ENCODE measurements at regions of chr11 and their contacts with region 1.

Region 1: DNA sequence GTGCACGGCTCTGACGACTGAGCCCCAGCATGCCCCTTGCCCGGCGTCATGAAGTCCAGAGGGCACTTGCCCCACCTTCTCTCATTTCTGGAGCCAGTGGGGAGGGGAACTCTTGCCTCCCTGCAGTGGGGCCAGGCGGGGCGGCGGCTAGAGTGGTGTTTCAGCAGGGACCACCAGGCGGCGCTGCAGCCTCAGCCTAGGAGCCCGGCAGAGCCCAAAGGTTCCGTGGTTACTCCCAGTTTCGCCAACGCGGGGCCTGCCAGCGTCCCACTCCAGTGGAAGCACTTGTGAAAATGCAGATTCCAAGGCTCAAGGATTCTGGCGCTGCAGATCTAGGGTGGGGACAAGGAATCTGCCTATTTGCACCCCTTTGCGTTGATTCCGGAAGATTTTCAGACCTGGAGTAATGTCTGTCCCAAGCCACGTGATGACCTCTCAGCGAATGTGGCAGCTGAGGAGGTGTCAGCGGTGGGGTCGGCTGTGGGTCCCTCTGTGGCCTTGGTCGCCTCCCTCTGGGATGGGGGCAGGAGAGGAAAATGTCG is 55.7 kb downstream of the CD82 start:
- DNase-seq: peak; percentile 73 to 91 (median 80)
- H3K4me3 ChIP-seq: peak overlapping the region in 25 of 59 donors; percentile 5 to 46 (median 26)
- H3K27ac ChIP-seq: peak overlapping the region in 17 of 59 donors; percentile 0 to 69 (median 24)
- H3K27me3 ChIP-seq: no peaks in the 10 kb centered on the region
- CTCF ChIP-seq: peak; percentile 91 to 100 (median 98)

Region 2: DNA sequence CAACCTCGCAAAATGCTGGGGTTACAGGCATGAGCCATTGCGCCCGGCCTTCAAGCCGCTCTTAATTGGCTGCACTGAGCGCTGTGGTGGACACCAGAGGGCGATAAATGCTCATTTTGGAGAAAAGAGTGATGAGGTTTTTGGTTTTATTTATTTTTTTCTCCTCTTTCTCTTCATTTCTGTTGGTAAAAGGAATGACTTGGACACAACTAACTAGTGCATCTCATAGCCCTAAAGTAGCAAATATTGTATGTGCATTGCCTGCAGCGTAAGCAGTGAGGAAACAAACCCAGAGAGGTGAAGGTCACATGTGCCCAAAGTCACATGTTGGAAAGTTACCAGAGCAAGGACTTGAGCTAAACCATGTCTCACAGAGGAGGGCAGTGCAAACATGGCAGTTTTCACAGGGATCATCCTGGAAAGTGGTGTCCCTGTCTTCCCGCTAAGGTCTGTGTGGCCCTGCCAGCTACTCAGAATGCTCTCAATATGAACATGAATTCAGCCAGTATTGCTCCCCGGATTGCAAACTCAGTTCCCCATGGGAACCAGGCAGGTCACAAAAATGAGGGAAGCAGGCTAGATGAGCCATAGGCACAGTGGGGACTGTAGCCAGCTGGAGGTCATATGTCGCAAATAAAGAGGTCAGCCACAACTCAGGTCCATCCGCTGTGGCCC is 64.3 kb before region 1 on chr11:
- intact Hi-C with region 1: loop called (anchors 1 kb)
- DNase-seq: peak in 8 of 10 donors; percentile 61 to 80 (median 69)
- H3K4me3 ChIP-seq: no peak overlapping the region
- H3K27ac ChIP-seq: peak overlapping the region in 23 of 59 donors; percentile 2 to 74 (median 40)
- H3K27me3 ChIP-seq: no peaks in the 10 kb centered on the region
- CTCF ChIP-seq: peak; percentile 40 to 95 (median 84)

Region 3: DNA sequence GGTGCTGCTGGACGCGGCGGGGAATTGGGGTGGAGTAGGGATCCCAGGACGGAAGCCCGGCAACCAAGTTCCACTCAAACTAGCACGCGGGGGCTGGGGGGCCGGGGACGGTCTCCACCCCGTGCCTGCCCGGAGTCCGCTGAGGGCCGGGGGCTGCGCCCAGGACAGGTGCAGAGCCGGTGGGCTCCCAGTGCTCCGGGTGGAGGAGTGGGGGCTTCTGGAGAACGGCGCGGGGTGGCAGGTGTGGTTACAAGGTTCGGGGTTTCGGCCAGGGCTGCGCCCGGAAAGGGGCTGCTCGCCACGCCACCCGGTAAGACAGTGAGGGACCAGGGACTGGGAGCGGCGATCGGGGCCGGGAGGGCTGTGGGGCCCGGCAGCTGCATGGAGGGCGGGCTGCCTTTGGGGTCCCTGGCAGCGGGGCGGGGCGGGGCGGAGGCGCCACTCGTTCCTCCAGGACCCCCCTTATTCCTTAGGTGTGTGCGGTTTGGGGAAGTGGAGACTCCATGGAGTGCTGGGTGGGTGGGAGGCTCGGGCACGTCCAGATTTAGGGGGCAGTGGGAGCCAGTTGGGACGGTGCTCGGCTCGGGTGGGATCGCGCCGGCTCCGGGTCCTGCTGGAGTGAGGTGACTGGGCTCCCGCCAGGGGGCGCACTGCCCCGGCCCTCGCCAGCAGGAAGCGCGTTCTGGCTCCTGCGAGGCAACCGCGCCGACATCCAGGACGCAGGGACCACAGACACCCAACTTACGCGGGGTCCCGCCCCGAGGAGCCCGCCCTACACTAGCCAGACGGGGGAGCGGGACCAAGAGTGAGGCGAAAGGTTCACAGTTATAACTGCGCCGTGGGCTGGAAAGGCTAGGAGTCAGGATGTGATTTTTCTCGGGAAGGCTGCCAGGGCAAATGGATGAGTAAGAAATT is 106.4 kb after region 1 on chr11:
- intact Hi-C with region 1: loop called in 1 of 2 experiments (anchors 2 kb)
- DNase-seq: peak; percentile 60 to 92 (median 70)
- H3K4me3 ChIP-seq: peak overlapping the region; percentile 40 to 76 (median 61)
- H3K27ac ChIP-seq: peak overlapping the region in 6 of 59 donors; percentile 6 to 78 (median 50)
- H3K27me3 ChIP-seq: peaks cover 0 to 38% (median 6%) of the 10 kb centered on the region in 45 donors
- CTCF ChIP-seq: peak; percentile 66 to 99 (median 95)

Region 4: DNA sequence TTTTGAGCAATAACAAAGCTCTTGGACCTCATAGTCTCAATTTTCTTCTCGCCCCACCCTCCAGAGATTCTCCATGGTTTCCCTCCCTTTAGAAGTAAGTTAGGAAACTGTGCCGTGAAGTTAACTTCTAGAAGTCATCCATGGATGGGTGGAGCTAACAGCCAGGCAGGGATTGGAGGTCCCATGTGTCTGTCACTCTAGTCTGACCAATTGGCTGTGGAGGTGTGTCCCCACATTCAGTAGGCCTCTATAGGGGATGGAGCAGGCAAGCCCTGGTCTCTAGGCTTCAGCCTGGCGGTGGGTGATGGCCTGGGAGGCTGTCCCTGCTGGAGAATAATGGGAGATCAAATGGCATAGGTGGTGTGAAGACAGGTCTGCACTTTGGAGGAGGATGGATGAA is 278.7 kb after region 1 on chr11:
- intact Hi-C with region 1: loop called in 1 of 2 experiments (anchors 5 kb)
- DNase-seq: no peak
- H3K4me3 ChIP-seq: no peak overlapping the region
- H3K27ac ChIP-seq: no peak overlapping the region
- H3K27me3 ChIP-seq: peaks cover 0 to 3% (median 0%) of the 10 kb centered on the region in 45 donors
- CTCF ChIP-seq: no peak

Region 5: DNA sequence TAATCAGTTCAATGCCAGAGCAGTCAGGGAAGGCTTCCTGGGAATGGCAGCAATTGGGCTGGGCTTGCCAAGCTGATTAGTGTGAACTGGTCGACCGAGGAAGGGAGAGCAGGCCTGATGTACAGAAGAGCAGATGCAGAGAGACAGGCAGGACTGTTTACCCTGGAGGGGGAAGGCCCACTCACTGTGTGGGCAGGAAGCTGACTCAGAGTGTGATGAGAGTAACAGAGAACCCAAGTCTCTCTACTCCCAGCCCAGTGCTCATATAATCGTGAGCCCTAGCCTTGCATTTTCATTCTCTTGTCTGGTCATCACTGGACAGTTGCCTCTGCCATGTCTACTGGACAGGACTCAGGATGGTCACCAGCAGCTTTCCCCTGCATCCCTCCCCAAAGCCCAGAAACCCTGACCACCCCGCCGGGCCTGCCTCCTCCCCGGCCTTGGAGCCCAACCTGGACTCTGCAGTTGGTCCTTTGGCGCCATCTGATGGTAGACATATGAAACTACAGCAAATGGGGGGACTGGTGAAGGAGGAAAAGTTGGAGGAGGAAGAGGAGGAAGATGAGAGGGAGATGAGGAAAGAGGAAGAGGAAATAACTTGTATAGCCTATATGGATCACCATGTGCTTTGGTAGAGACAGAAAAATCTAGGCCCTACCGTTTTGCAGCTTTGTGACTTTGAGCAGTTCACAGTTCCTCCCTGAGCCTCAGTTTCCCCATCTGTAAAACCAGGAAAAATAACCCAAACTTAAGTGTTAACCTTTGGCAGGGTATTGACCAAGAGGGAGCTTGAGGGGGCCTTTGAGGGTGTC is 481.8 kb after region 1 on chr11:
- intact Hi-C with region 1: loop called (anchors 5 to 10 kb)
- DNase-seq: peak in 4 of 10 donors; percentile 35 to 75 (median 63)
- H3K4me3 ChIP-seq: peak overlapping the region in 1 of 59 donors; percentile 16
- H3K27ac ChIP-seq: peak overlapping the region in 2 of 59 donors; percentile 15 to 28
- H3K27me3 ChIP-seq: peaks cover 0 to 12% (median 0%) of the 10 kb centered on the region in 45 donors
- CTCF ChIP-seq: peak; percentile 70 to 99 (median 95)